Activated CD4-positive, alpha-beta memory T cell treated with anti-CD3 and anti-CD28 coated beads for 36 hours (primary cell): ENCODE measurements at regions of chr2 and their contacts with region 1.

Region 1: GRCh38 chr2:203909261-203909967 is 27.1 kb upstream of the ICOS start:
- DNase-seq: peak; percentile 42
- H3K4me3 Mint-ChIP-seq: no peak overlapping the region
- H3K27ac Mint-ChIP-seq: peak overlapping the region; percentile 59
- H3K4me1 Mint-ChIP-seq: peaks cover 33% of the 10 kb centered on the region
- H3K27me3 Mint-ChIP-seq: peaks cover 4% of the 10 kb centered on the region

Region 2: GRCh38 chr2:203484266-203485112 is 424.9 kb before region 1 on chr2:
- CTCF ChIA-PET with region 1: interaction called, 4 read pairs
- POLR2A ChIA-PET with region 1: no interaction called
- intact Hi-C with region 1: loop called (anchors 2 kb)
- DNase-seq: peak; percentile 59
- H3K4me3 Mint-ChIP-seq: no peak overlapping the region
- H3K27ac Mint-ChIP-seq: peak overlapping the region; percentile 1
- H3K4me1 Mint-ChIP-seq: peaks cover 10% of the 10 kb centered on the region
- H3K27me3 Mint-ChIP-seq: no peaks in the 10 kb centered on the region

Region 3: GRCh38 chr2:203858176-203858575 is 51.2 kb before region 1 on chr2:
- CTCF ChIA-PET with region 1: interaction called, 12 read pairs
- POLR2A ChIA-PET with region 1: interaction called, 4 read pairs
- intact Hi-C with region 1: loop called (anchors 1 kb)
- DNase-seq: peak; percentile 66
- H3K4me3 Mint-ChIP-seq: peak overlapping the region; percentile 25
- H3K27ac Mint-ChIP-seq: peak overlapping the region; percentile 81
- H3K4me1 Mint-ChIP-seq: peaks cover 84% of the 10 kb centered on the region
- H3K27me3 Mint-ChIP-seq: no peaks in the 10 kb centered on the region

Region 4: DNA sequence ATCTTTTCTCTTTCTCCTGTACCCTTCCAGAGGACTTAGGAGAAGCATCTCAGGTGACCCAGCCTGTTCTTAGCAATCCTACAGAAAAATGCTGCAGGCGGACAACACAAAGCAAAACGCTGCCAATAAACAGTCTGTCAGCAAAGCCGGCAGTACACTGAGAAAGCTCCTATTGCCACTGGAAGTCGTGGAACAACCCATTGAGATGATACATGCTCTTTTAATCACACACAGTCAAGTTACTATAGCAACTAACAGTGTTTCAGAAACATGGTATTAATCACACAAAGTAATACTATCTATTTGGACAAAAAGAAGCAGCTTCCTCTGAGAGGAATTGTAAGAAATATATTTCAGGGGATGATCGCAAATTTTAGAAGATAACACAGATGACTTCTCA is 31.4 kb before region 1 on chr2:
- CTCF ChIA-PET with region 1: interaction called, 26 read pairs
- POLR2A ChIA-PET with region 1: interaction called, 27 read pairs
- intact Hi-C with region 1: no loop called
- DNase-seq: no peak
- H3K4me3 Mint-ChIP-seq: no peak overlapping the region
- H3K27ac Mint-ChIP-seq: peak overlapping the region; percentile 14
- H3K4me1 Mint-ChIP-seq: peaks cover 49% of the 10 kb centered on the region
- H3K27me3 Mint-ChIP-seq: no peaks in the 10 kb centered on the region

Region 5: DNA sequence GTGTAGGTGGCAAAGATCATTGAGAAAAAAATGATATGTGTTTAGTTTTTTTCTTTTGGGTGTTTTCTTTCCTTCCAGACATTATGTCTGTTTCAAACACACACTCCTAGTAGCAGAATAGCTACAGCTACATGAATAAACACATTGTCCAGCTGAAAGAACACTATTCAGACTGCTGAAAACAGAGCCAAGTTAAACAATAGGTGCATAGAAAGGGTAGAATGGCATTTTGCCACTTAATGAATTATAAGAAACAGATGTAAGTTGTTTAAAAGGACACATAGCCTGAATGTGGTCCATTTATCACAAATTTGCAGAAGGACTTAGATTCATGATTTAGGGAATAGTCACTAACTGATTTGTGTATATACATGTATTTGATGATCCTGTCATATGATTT is 21.7 kb before region 1 on chr2:
- CTCF ChIA-PET with region 1: interaction called, 18 read pairs
- POLR2A ChIA-PET with region 1: interaction called, 15 read pairs
- intact Hi-C with region 1: loop called (anchors 2 kb)
- DNase-seq: no peak
- H3K4me3 Mint-ChIP-seq: no peak overlapping the region
- H3K27ac Mint-ChIP-seq: peak overlapping the region; percentile 90
- H3K4me1 Mint-ChIP-seq: peaks cover 84% of the 10 kb centered on the region
- H3K27me3 Mint-ChIP-seq: peaks cover 2% of the 10 kb centered on the region

Region 6: GRCh38 chr2:203893401-203893800 is 16.0 kb before region 1 on chr2:
- CTCF ChIA-PET with region 1: interaction called, 15 read pairs
- POLR2A ChIA-PET with region 1: interaction called, 6 read pairs
- intact Hi-C with region 1: no loop called
- DNase-seq: no peak
- H3K4me3 Mint-ChIP-seq: peak overlapping the region; percentile 14
- H3K27ac Mint-ChIP-seq: peak overlapping the region; percentile 84
- H3K4me1 Mint-ChIP-seq: peaks cover 77% of the 10 kb centered on the region
- H3K27me3 Mint-ChIP-seq: no peaks in the 10 kb centered on the region

Region 7: DNA sequence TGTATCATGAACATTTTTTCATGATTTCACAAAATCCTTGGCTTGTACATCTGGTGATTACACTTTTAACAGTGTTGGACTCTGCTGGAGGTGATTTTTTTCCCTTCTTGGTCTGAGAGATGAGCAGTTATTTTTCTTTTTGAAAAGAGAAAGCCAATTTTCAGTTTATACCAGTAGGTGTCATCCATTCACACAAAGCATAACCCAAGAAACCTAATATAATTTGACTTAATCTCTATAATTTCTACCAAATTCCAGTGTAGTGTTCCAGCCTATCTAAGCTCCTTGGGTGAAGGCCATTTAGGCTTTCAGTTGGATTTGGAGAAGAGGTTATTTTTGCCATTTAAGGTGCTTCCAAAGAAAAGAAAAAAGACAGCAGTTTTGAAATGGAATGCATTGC is 19.4 kb after region 1 on chr2:
- CTCF ChIA-PET with region 1: interaction called, 5 read pairs
- POLR2A ChIA-PET with region 1: interaction called, 15 read pairs
- intact Hi-C with region 1: loop called (anchors 2 kb)
- DNase-seq: no peak
- H3K4me3 Mint-ChIP-seq: no peak overlapping the region
- H3K27ac Mint-ChIP-seq: no peak overlapping the region
- H3K4me1 Mint-ChIP-seq: peaks cover 42% of the 10 kb centered on the region
- H3K27me3 Mint-ChIP-seq: peaks cover 2% of the 10 kb centered on the region

Region 8: DNA sequence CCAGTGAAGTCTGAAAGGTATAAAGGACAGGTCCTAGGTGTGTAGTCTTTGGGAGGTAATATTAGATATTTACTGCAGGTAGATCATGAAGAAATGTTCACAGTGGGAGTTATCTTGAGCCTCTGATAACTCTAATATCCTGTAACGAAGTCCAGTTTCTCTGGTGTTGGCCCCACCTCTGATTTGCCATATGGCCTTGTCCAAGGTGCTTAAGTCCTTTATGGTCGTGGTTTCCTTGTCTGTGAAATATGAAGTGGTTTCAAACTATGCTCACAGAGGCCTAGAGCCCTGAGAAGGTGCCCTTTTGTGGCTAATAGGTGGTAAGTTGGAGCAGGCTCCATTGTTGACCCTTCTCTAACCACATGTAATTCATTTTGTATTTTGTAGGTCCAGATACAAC is 217.8 kb after region 1 on chr2:
- CTCF ChIA-PET with region 1: no interaction called
- POLR2A ChIA-PET with region 1: no interaction called
- intact Hi-C with region 1: no loop called
- DNase-seq: no peak
- H3K4me3 Mint-ChIP-seq: no peak overlapping the region
- H3K27ac Mint-ChIP-seq: no peak overlapping the region
- H3K4me1 Mint-ChIP-seq: peaks cover 5% of the 10 kb centered on the region
- H3K27me3 Mint-ChIP-seq: peaks cover 10% of the 10 kb centered on the region